ENCODE measurements at regions of chr1 and their contacts with region 1.

Region 1: GRCh38 chr1:157963713-157964112 is 29.7 kb upstream of the KIRREL1 start:
- DNase-seq: peak; percentile 70
- ATAC-seq: peak; percentile 84

Region 2: GRCh38 chr1:158124999-158125398 is 161.3 kb after region 1 on chr1:
- intact Hi-C with region 1: loop called (anchors 2 kb)
- DNase-seq: peak; percentile 90
- ATAC-seq: peak; percentile 99

Region 3: GRCh38 chr1:158527190-158527815 is 563.6 kb after region 1 on chr1:
- intact Hi-C with region 1: loop called (anchors 10 kb)
- DNase-seq: no peak
- ATAC-seq: no peak